K562 (cell line): ENCODE measurements at regions of chr5 and their contacts with region 1.

Region 1: DNA sequence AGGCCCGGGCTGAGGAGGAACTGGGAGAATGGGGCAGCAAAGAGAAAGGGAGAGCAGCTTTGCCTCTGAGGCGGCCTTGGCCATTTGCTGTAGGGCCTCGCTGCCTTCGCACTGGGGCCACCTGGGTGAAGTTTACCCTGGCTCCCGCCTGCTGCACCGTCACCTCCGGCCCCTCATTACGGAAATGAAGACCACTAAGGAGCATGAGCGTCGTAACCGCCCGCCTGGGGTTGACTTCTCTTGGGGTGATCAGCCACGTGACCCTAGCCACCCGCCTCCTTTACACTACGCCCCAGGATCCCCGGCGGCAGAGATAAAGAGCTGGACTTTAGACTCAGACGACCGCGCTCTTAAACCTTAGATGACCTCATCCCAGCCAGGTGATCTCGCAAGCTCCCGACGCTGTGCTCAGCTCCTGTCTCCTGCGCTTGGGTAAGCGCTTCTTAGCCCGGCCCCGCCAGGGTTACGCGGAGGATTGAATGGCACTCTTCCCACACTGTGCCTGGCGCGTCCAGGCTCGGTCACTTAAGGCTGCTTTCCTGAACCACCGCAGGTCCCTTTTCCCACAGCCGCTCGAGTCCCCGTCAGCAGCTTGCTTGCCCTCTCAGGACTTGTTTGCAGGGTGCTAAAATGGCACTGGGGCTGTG is 107.9 kb upstream of the LARP1 start:
- DNase-seq: peak; percentile 70 to 86 (median 79)
- ATAC-seq: peak; percentile 85
- H3K4me3 ChIP-seq: peak overlapping the region; percentile 20; the same call in 1 of the 2 replicates
- H3K27ac ChIP-seq: peak overlapping the region; percentile 24; the same call in 1 of the 3 replicates
- H3K4me1 ChIP-seq: peaks cover 29 to 38% of the 10 kb centered on the region in 2 experiments
- H3K27me3 ChIP-seq: no peaks in the 10 kb centered on the region
- CTCF ChIP-seq: no peak
- EP300 ChIP-seq: peak; percentile 57
- POLR2A ChIP-seq: no peak; the same call in 1 of the 2 replicates
- RAD21 ChIP-seq: no peak

Region 2: DNA sequence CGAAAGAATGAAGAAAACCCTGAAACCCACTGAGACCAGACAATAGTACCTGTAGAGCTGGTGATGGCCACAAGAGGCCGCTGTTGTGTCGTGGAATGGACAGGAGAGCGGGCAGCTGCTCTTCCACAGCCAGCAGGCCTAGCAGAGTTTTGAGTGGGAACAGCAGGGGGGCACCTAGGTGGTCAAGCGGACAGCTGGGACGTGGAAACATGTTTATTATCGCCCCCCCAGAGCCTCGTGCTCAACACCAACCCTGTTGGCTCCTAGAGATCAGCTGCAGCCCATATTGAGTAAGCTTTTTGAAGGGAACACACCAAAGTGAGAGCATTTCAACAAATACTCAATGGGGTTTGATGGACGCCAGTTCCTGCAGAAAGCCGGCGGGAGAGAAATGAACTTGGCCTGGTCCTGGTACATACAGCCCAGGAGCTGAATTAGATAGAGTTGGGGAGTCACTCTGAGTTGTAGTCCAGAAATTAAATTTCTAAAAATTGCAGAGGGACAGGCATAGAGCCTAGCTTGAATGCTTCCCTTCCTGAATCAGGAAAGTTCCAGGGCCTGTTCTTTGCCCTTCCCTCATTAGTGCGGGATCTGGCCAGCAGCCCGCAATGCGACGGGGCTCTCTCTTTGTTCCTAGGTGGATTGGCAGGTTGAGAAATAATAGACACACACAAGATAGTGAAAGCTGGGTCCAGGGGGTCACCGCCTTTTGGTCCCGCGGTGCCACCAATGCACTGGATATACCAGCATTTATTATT is 574.6 kb before region 1 on chr5:
- CTCF ChIA-PET with region 1: no interaction called
- POLR2A ChIA-PET with region 1: no interaction called
- in situ Hi-C with region 1: no loop called
- intact Hi-C with region 1: loop called (anchors 5 kb)
- DNase-seq: peak; percentile 83 to 86 (median 84)
- ATAC-seq: peak; percentile 98
- H3K4me3 ChIP-seq: no peak overlapping the region
- H3K27ac ChIP-seq: no peak overlapping the region
- H3K4me1 ChIP-seq: no peaks in the 10 kb centered on the region; a peak in 1 of 5 replicates
- H3K27me3 ChIP-seq: no peaks in the 10 kb centered on the region; a peak in 1 of 5 replicates
- CTCF ChIP-seq: peak; percentile 93 to 97 (median 96)
- EP300 ChIP-seq: no peak
- POLR2A ChIP-seq: no peak
- RAD21 ChIP-seq: peak; percentile 96 to 97

Region 3: GRCh38 chr5:154801083-154801482 is 153.8 kb after region 1 on chr5:
- CTCF ChIA-PET with region 1: no interaction called
- POLR2A ChIA-PET with region 1: no interaction called
- in situ Hi-C with region 1: loop called (anchors 10 kb)
- intact Hi-C with region 1: no loop called
- DNase-seq: no peak
- ATAC-seq: no peak
- H3K4me3 ChIP-seq: no peak overlapping the region
- H3K27ac ChIP-seq: no peak overlapping the region
- H3K4me1 ChIP-seq: no peaks in the 10 kb centered on the region
- H3K27me3 ChIP-seq: no peaks in the 10 kb centered on the region
- CTCF ChIP-seq: no peak
- EP300 ChIP-seq: no peak
- POLR2A ChIP-seq: no peak
- RAD21 ChIP-seq: no peak

Region 4: DNA sequence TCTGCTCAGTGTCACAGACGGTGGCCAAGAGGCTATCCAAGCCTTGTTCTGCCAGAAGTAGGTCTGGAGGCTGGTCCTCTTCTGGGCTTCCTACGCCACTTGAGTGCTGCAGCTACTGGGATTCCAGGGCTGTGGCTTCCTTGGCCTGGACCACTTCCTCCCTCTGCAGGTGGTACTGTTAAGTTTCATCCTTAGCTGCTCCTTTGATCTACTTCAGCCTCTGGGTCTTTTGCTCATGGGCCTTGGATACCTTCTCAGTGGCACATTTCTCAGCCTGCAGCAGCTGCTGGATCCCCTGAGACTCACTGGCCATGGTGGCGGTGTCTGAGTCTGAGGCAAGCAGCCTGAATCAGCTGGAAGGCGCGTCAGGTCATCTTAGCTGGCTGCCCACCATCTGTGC is 221.5 kb after region 1 on chr5:
- CTCF ChIA-PET with region 1: interaction called, 11 read pairs
- POLR2A ChIA-PET with region 1: interaction called, 5 read pairs
- in situ Hi-C with region 1: no loop called
- intact Hi-C with region 1: loop called (anchors 1 kb)
- DNase-seq: peak in 3 of 4 experiments; percentile 22 to 55 (median 49)
- ATAC-seq: peak; percentile 89
- H3K4me3 ChIP-seq: no peak overlapping the region
- H3K27ac ChIP-seq: no peak overlapping the region
- H3K4me1 ChIP-seq: no peaks in the 10 kb centered on the region
- H3K27me3 ChIP-seq: no peaks in the 10 kb centered on the region
- CTCF ChIP-seq: peak; percentile 54 to 73 (median 60)
- EP300 ChIP-seq: no peak
- POLR2A ChIP-seq: no peak
- RAD21 ChIP-seq: peak; percentile 40 to 70

Region 5: GRCh38 chr5:155017610-155018009 is 370.4 kb after region 1 on chr5:
- CTCF ChIA-PET with region 1: no interaction called
- POLR2A ChIA-PET with region 1: no interaction called
- in situ Hi-C with region 1: loop called (anchors 10 kb)
- intact Hi-C with region 1: no loop called
- DNase-seq: no peak
- ATAC-seq: peak; percentile 48; the same call in 2 of the 3 replicates
- H3K4me3 ChIP-seq: no peak overlapping the region
- H3K27ac ChIP-seq: no peak overlapping the region
- H3K4me1 ChIP-seq: peaks cover 0 to 14% of the 10 kb centered on the region in 2 experiments; a peak in 4 of 5 replicates
- H3K27me3 ChIP-seq: peaks cover 18 to 38% of the 10 kb centered on the region in 2 experiments; a peak in 4 of 5 replicates
- CTCF ChIP-seq: no peak
- EP300 ChIP-seq: no peak
- POLR2A ChIP-seq: no peak
- RAD21 ChIP-seq: no peak

Region 6: DNA sequence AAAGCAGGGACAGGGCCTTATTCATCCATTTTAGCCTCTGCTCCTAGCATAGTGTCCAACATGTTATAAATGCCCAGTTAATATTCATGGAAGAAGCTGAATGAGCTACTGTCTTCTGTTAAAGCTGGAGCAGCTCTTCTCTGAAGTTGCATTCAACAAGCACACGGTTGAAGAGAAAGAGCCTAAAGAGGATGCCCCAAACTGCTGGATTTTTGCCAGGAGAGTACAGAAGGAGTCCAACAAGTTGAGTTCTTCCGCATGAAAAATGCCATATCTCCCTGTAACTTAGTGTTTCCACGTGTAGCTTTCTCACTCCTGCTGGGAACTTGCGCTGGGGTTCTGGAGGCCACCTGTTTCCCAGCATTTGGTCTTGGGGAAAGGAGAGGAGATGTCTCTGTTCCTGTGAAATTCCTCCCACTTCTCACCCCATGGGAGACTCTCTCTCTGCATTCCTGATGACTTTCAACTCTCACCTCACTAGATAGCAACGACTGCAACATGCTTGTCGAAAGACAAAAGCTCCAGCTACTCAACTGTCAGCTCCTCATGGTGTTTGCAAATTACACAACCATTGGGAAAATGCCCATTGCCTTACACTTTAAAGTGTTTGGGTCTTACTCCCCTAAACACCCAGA is 489.1 kb after region 1 on chr5:
- CTCF ChIA-PET with region 1: no interaction called
- POLR2A ChIA-PET with region 1: interaction called, 3 read pairs
- in situ Hi-C with region 1: loop called (anchors 5 kb)
- intact Hi-C with region 1: no loop called
- DNase-seq: no peak
- ATAC-seq: no peak
- H3K4me3 ChIP-seq: no peak overlapping the region
- H3K27ac ChIP-seq: no peak overlapping the region
- H3K4me1 ChIP-seq: no peaks in the 10 kb centered on the region
- H3K27me3 ChIP-seq: no peaks in the 10 kb centered on the region
- CTCF ChIP-seq: no peak
- EP300 ChIP-seq: no peak
- POLR2A ChIP-seq: no peak
- RAD21 ChIP-seq: no peak

Region 7: DNA sequence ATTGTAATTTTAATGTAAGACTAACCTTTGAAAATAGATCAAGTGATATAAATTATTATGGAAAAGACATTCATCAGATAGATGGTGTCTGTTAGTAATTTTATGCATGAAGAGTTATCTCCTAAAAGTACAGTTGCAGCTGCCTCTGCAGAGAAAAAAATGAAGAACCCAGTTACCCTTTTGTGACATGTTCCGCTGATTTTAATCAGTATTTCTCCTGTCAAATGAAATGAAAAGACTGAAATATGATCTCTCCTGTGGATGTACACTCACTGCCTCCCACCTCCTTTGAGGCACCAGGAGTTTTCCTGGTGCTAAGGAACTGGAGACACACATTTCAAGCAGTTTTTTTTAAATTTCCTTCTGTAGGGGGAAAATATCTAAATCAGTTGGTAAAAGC is 643.7 kb after region 1 on chr5:
- CTCF ChIA-PET with region 1: no interaction called
- POLR2A ChIA-PET with region 1: no interaction called
- in situ Hi-C with region 1: loop called (anchors 25 kb)
- intact Hi-C with region 1: loop called (anchors 10 kb)
- DNase-seq: no peak
- ATAC-seq: no peak
- H3K4me3 ChIP-seq: no peak overlapping the region
- H3K27ac ChIP-seq: no peak overlapping the region
- H3K4me1 ChIP-seq: no peaks in the 10 kb centered on the region
- H3K27me3 ChIP-seq: no peaks in the 10 kb centered on the region
- CTCF ChIP-seq: no peak
- EP300 ChIP-seq: no peak
- POLR2A ChIP-seq: no peak
- RAD21 ChIP-seq: no peak